BJ (cell line): ENCODE measurements at regions of chr6 and their contacts with region 1.

Region 1: DNA sequence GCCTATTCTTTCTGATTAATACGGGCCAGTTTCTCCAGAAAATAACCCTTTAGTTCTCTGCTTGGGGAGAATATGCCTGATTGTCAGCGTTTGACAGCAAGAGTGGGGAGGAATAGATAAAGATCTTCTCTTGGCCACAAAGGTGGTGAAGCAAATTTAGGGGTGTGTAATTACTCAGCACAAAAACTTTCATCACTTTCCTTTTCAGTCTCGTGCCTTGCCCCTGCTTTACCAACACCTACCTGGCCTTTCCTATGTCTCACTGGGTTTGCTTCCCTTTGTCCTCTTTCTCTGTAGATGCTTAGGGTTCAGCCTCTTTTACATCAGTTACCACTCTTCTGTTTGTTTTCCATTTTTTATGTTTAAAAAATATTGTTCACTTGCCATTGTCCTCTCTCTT is 99.2 kb downstream of the MCHR2 start:
- DNase-seq: no peak
- H3K4me3 ChIP-seq: no peak overlapping the region
- H3K27me3 ChIP-seq: no peaks in the 10 kb centered on the region
- CTCF ChIP-seq: no peak

Region 2: GRCh38 chr6:99905209-99906106 is 10.6 kb after region 1 on chr6:
- CTCF ChIA-PET with region 1: interaction called, 10 read pairs
- POLR2A ChIA-PET with region 1: no interaction called
- DNase-seq: peak; percentile 15
- H3K4me3 ChIP-seq: no peak overlapping the region
- H3K27me3 ChIP-seq: no peaks in the 10 kb centered on the region
- CTCF ChIP-seq: peak; percentile 80